ENCODE measurements at regions of chr7 and their contacts with region 1.

Region 1: GRCh38 chr7:83514977-83515376 is 134.0 kb downstream of the SEMA3E start:
- DNase-seq: no peak
- H3K4me3 ChIP-seq: no peak overlapping the region
- H3K27ac ChIP-seq: no peak overlapping the region
- H3K4me1 ChIP-seq: no peaks in the 10 kb centered on the region
- H3K27me3 ChIP-seq: peaks cover 7% of the 10 kb centered on the region
- CTCF ChIP-seq: no peak

Region 2: GRCh38 chr7:83410989-83411591 is 103.9 kb before region 1 on chr7:
- CTCF ChIA-PET with region 1: no interaction called
- POLR2A ChIA-PET with region 1: no interaction called
- intact Hi-C with region 1: loop called (anchors 2 kb)
- DNase-seq: peak; percentile 58
- H3K4me3 ChIP-seq: no peak overlapping the region
- H3K27ac ChIP-seq: no peak overlapping the region
- H3K4me1 ChIP-seq: no peaks in the 10 kb centered on the region
- H3K27me3 ChIP-seq: peaks cover 47% of the 10 kb centered on the region
- CTCF ChIP-seq: peak; percentile 73